ENCODE measurements at regions of chr22 and their contacts with region 1.

Region 1: DNA sequence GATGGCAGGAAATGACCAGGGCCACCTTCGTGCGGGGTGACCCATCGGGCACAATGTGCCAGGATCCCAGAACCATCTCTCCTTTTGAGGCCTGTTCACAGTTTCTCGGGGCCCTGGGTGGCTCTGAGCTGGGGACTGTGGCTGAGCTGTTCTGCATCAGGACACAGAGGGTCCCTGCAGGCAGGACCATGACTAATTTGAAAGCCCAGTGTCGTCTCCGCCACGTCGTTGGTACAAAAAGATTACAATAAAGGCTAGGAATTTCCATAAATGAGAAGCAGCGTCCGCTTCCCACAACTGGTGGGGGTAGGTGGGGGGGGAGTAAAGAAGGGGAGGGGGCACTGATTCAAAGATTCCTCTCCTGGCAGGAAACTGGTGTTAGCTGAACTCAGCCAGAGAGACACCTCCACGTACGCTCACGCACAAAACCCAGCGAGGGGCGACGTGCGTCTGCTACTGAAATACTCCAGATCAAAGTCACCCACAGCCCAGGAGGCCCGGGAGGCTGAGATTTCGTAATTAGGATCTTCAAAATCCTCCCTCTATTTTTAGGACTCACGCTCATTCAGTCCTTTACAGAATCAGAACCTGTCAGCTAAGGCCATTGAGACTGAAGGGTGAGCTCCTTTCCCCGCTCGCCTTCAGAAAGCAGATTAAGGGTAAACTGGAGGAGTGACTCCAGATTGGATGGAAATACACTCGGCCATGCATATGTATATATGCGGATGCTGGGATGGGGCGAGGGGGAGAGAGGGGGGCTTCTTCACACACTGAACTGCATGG is 11.0 kb downstream of the MN1 start:
- DNase-seq: no peak
- ATAC-seq: no peak
- H3K4me3 ChIP-seq: no peak overlapping the region
- H3K27ac ChIP-seq: no peak overlapping the region
- H3K4me1 ChIP-seq: no peaks in the 10 kb centered on the region
- H3K27me3 ChIP-seq: no peaks in the 10 kb centered on the region
- CTCF ChIP-seq: no peak

Region 2: GRCh38 chr22:27772081-27772987 is 18.2 kb before region 1 on chr22:
- CTCF ChIA-PET with region 1: no interaction called
- POLR2A ChIA-PET with region 1: no interaction called
- intact Hi-C with region 1: no loop called
- DNase-seq: no peak
- ATAC-seq: no peak
- H3K4me3 ChIP-seq: no peak overlapping the region
- H3K27ac ChIP-seq: no peak overlapping the region
- H3K4me1 ChIP-seq: no peaks in the 10 kb centered on the region
- H3K27me3 ChIP-seq: no peaks in the 10 kb centered on the region
- CTCF ChIP-seq: no peak

Region 3: DNA sequence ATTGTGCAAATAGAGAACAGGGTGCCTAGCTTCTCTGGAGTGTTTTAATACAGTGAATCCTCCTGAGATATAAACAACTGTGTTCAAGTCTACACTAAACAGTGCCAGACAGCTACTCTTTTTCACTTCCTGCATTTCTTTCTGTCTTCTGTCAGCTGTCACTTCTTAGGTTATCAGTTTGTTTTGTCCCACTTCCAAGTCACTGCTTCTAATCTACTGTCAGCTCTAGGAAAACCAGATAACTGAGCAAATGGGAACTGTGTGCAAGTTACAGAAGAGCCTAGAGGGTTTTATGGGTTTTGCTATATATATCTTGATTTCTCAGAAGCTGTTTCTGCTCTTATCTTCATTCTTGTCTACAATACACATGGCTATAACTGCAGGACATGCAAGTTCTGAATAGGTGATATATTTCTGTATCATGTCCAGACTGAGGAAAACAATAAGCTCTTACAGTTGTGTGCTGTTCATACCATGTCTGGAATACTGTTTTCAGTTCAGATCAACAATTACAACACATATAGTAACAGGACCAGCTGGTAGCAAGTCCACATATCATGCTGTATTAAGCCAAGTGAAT is 122.7 kb after region 1 on chr22:
- CTCF ChIA-PET with region 1: no interaction called
- POLR2A ChIA-PET with region 1: no interaction called
- intact Hi-C with region 1: no loop called
- DNase-seq: no peak
- ATAC-seq: no peak
- H3K4me3 ChIP-seq: no peak overlapping the region
- H3K27ac ChIP-seq: no peak overlapping the region
- H3K4me1 ChIP-seq: peaks cover 19% of the 10 kb centered on the region
- H3K27me3 ChIP-seq: no peaks in the 10 kb centered on the region
- CTCF ChIP-seq: no peak

Region 4: DNA sequence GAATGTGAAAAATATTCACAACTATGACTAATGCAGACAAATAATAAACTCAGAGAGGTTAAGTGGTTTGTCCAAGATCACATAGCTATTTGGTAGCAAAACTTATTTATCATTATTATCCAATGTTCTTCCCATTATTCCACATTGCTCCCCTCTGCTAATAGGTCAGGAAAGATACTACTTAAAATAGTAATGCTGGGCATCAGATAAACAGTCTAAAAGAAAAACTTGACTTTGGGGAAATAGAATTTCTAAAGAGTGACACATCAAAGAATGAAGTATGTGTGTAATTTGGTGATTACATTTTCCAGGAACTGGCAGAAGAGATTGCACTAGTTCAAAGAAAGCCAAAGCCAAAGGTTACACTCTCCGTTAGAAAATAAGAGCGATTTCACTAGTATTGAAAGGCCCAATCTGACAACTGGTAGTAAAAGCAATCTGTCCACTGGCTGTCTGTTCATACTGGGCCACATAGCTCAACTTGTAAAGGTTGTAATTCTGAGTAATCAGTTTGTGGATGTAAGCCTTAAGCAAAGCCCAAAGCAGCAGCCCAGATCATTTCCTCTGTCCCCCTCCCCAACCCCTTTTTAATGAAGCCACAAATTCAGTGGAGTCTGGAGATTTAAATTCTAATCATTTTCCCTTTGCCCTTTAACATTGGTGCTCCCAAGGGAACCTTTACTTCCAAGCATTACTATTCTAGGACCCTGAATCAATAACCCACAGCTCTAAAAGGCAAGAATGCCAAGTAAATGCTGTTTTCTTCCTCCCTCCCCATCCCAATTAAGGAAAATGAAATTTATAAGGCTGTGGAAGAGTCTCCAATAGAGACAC is 605.6 kb after region 1 on chr22:
- CTCF ChIA-PET with region 1: interaction called, 11 read pairs
- POLR2A ChIA-PET with region 1: no interaction called
- intact Hi-C with region 1: no loop called
- DNase-seq: peak; percentile 4
- ATAC-seq: peak; percentile 61
- H3K4me3 ChIP-seq: no peak overlapping the region
- H3K27ac ChIP-seq: no peak overlapping the region
- H3K4me1 ChIP-seq: 0 out of 2 replicates have a peak, but pooled peaks cover 4% of the 10 kb centered on the region
- H3K27me3 ChIP-seq: no peaks in the 10 kb centered on the region
- CTCF ChIP-seq: no peak

Region 5: DNA sequence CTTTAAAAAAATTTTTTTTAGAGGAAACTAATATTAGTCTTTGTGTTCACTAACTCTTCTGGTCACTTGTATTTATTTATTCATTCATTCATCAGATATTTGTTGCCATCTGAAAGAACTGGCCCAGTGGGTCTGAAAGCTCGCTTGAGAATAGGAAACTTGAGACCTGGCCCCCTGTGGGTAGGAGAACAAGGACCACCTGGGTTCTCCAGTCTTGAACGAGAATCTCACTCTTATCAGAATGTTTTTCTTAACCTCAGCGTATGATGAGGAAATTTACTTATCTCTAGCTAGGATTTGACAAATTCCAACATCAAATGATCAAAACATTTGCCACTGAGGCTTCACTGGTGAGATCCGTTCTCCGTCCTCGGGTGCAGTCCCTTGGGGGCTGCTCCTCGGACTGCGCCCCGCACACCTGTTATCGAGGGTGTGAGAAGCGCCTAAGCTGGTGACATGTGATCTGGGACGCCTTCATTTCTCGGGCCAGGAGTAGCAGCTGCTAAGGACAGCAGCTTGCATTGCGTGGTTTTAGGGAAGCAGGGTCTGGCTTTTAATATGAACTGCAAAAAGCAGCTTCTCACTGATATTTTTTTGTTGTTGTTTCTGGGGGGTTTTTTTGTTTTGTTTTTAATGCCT is 1264.7 kb after region 1 on chr22:
- CTCF ChIA-PET with region 1: no interaction called
- POLR2A ChIA-PET with region 1: no interaction called
- intact Hi-C with region 1: no loop called
- DNase-seq: no peak
- ATAC-seq: no peak
- H3K4me3 ChIP-seq: no peak overlapping the region
- H3K27ac ChIP-seq: no peak overlapping the region
- H3K4me1 ChIP-seq: no peaks in the 10 kb centered on the region
- H3K27me3 ChIP-seq: no peaks in the 10 kb centered on the region
- CTCF ChIP-seq: no peak